Activated CD4-positive, alpha-beta T cell treated with anti-CD3 and anti-CD28 coated beads for 36 hours (primary cell): ENCODE measurements at regions of chr2 and their contacts with region 1.

Region 1: DNA sequence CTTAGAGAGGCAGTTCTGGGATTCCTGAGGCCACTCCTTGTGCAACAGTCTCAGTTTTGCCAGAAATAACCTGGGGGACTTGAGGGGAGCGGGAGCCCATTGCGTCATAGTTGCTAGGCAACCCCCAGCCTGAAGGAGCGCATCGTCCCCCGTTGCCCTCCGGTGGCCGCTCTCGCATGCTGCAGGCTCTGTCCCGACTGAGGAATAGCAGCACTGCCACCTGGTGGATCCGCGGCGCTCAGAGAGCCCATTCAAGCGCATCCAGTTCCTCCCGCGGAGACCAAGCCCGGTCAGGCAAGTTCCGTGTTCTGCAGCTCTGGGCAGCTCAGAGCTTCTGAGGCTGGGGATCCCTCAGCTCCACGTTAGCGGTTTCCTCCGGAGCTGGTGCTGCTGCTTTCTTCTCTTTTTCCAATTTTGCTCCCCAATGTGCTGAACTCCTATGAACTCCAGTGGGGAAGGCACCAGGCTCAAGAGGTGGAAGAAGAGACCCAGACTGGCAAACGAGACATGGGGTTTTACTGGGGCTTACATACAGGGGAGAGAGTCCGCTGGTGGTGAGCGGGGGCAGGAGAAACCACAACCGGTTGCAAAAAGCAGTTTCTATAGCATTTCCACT is 15.1 kb downstream of the SLC4A3 start:
- DNase-seq: peak; percentile 96
- ATAC-seq: peak; percentile 100
- H3K4me3 Mint-ChIP-seq: no peak overlapping the region
- H3K27ac Mint-ChIP-seq: no peak overlapping the region
- H3K4me1 Mint-ChIP-seq: peaks cover 8% of the 10 kb centered on the region
- H3K27me3 Mint-ChIP-seq: peaks cover 6% of the 10 kb centered on the region

Region 2: GRCh38 chr2:219331560-219332213 is 310.9 kb before region 1 on chr2:
- CTCF ChIA-PET with region 1: no interaction called
- POLR2A ChIA-PET with region 1: no interaction called
- intact Hi-C with region 1: no loop called
- DNase-seq: peak; percentile 58
- ATAC-seq: no peak
- H3K4me3 Mint-ChIP-seq: no peak overlapping the region
- H3K27ac Mint-ChIP-seq: no peak overlapping the region
- H3K4me1 Mint-ChIP-seq: no peaks in the 10 kb centered on the region
- H3K27me3 Mint-ChIP-seq: peaks cover 48% of the 10 kb centered on the region

Region 3: GRCh38 chr2:219402665-219403515 is 239.7 kb before region 1 on chr2:
- CTCF ChIA-PET with region 1: interaction called, 3 read pairs
- POLR2A ChIA-PET with region 1: no interaction called
- intact Hi-C with region 1: loop called (anchors 1 to 10 kb)
- DNase-seq: peak; percentile 78
- ATAC-seq: peak; percentile 95
- H3K4me3 Mint-ChIP-seq: no peak overlapping the region
- H3K27ac Mint-ChIP-seq: no peak overlapping the region
- H3K4me1 Mint-ChIP-seq: peaks cover 1% of the 10 kb centered on the region
- H3K27me3 Mint-ChIP-seq: peaks cover 2% of the 10 kb centered on the region

Region 4: DNA sequence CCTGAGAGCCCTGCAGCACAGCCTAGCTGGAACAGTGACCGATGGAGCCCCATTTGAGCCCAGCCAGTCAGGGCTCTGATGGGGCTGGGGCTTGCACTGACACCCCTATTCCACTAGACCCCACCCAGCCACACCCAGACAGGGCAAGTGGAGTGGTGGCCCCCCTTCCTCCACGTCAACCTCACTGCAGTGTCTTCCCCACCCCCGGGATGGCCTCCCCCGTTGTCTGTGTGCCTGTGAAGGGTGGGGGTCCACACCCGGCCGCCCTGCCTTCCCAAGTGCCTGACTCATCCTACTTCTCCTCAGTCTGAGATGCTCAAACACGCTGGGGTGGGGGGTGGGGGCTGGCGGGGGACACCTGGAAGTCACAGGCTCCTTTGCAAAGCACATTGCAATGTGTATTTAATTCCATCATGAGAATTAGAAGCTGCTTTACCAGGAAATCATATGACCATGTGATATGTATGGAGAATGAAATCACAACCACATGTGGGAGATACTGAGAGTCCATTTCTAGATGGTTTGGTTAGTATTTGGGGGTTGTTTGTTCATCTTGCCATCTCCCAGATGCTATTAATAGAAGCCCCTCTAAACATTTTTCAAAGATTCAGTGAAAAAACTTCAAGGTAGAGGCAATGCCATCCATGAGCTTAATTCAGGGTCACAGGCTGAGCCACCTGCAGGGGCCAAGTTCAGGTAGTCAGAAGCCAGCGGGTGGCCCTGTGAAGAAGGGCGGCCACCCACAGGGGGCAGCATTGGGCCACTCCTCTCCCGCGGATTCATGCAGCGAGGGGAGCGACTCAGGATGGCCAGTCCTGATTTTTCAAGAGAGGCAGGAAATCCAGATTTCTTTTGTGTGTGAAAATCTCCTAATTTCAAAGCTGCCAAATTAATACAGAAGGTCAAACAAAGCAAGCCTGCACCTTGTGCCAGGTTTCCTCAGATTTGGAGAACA is 166.6 kb before region 1 on chr2:
- CTCF ChIA-PET with region 1: no interaction called
- POLR2A ChIA-PET with region 1: no interaction called
- intact Hi-C with region 1: loop called in 1 of 2 experiments (anchors 2 kb)
- DNase-seq: peak; percentile 86
- ATAC-seq: peak; percentile 94
- H3K4me3 Mint-ChIP-seq: no peak overlapping the region
- H3K27ac Mint-ChIP-seq: no peak overlapping the region
- H3K4me1 Mint-ChIP-seq: peaks cover 4% of the 10 kb centered on the region
- H3K27me3 Mint-ChIP-seq: no peaks in the 10 kb centered on the region

Region 5: GRCh38 chr2:219560037-219560892 is 82.3 kb before region 1 on chr2:
- CTCF ChIA-PET with region 1: interaction called, 14 read pairs
- POLR2A ChIA-PET with region 1: no interaction called
- intact Hi-C with region 1: no loop called
- DNase-seq: peak; percentile 48
- ATAC-seq: peak; percentile 70
- H3K4me3 Mint-ChIP-seq: no peak overlapping the region
- H3K27ac Mint-ChIP-seq: no peak overlapping the region
- H3K4me1 Mint-ChIP-seq: no peaks in the 10 kb centered on the region
- H3K27me3 Mint-ChIP-seq: peaks cover 6% of the 10 kb centered on the region

Region 6: DNA sequence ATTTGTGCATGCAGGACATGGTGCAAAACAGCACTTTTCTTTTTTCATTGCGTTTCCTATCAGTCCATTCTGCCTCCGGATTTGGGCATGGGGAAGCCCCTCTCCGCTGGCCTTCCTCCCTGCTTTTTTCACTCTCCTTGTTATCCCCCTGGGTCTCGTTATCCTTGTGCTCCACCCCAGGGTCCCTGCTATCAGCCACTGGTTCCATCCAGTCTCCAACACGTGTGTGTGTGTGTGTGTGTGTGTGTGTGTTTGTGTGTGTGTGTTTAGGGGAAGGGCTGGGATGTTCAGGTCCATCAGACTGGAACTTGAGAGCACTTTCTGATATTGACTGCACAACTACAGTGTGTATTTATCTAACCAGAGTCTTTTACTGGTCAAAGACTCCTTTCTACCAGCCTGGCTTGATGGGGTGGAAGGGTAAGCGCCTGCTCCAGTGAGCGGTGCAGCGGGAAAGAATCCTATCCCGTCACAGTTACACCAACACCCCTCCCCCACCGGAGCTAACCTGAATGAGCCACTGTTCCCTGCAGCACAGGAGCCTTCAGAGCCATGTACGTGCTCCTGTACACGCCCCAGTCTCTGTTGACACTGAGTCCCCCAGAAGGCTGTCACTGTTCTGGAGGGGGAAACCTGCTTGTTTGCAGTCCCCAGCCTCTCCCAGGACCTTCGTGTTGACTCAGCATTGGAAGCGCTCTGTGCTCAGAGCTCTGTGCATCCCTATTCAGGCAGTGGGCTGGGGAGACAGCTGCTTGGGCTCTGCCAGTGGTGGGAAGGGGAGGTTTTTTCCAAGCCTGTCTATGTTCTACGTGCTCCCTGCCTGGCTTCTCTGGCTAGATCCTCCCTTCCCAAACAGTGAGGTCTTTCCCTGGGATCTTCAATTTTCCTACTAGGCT is 65.8 kb before region 1 on chr2:
- CTCF ChIA-PET with region 1: no interaction called
- POLR2A ChIA-PET with region 1: no interaction called
- intact Hi-C with region 1: no loop called
- DNase-seq: no peak
- ATAC-seq: no peak
- H3K4me3 Mint-ChIP-seq: no peak overlapping the region
- H3K27ac Mint-ChIP-seq: no peak overlapping the region
- H3K4me1 Mint-ChIP-seq: no peaks in the 10 kb centered on the region
- H3K27me3 Mint-ChIP-seq: peaks cover 16% of the 10 kb centered on the region

Region 7: DNA sequence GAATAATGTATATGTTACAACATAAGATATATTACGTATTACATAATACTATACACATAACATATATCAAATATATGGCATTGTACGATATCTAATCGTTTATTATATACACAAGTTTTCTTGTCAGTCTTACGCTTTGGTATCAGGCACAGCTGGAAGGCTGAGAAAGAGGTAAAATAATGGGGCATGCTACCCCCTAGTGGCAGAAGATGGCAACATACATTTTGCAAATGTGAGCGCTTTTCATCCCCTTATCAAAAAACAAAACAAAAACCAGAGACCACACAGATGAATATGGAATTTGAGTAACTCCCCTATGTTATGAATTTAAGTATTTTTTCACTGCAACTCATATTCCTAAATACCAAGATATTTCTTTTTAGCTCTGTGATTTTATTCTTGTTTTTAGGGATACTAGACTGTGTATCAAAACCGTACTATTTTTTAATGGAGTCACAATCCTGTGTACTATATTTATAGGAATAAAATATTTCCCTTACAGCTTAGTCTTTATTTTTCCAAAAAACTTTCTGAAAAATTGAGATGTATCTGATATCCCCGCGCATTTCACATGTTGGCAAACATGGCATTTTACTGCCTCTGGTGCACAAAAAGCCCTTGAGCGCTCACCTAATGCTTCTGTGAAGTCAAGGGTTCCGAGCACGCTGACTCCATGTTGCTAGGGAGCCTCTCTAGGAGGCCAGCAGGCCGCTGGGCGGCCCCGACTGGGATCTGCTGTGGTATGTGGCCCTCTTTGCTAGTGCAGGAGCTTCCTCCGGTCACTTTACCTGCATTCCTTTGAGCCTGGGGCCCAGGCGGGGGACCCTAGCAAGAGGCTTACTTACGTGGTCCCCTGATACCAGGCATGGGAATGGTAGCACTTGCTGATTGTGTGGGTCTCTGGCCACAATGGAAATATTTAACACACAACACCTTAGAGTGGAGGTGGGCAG is 47.4 kb after region 1 on chr2:
- CTCF ChIA-PET with region 1: interaction called, 8 read pairs
- POLR2A ChIA-PET with region 1: no interaction called
- intact Hi-C with region 1: loop called in 1 of 2 experiments (anchors 1 kb)
- DNase-seq: peak; percentile 65
- ATAC-seq: peak; percentile 37
- H3K4me3 Mint-ChIP-seq: no peak overlapping the region
- H3K27ac Mint-ChIP-seq: no peak overlapping the region
- H3K4me1 Mint-ChIP-seq: peaks cover 16% of the 10 kb centered on the region
- H3K27me3 Mint-ChIP-seq: peaks cover 21% of the 10 kb centered on the region

Region 8: GRCh38 chr2:220687231-220687843 is 1044.8 kb after region 1 on chr2:
- CTCF ChIA-PET with region 1: no interaction called
- POLR2A ChIA-PET with region 1: no interaction called
- intact Hi-C with region 1: loop called in 1 of 2 experiments (anchors 5 kb)
- DNase-seq: peak; percentile 79
- ATAC-seq: peak; percentile 72
- H3K4me3 Mint-ChIP-seq: no peak overlapping the region
- H3K27ac Mint-ChIP-seq: no peak overlapping the region
- H3K4me1 Mint-ChIP-seq: no peaks in the 10 kb centered on the region
- H3K27me3 Mint-ChIP-seq: peaks cover 21% of the 10 kb centered on the region